Posterior vena cava (tissue), 2 donors: ENCODE measurements at regions of chr19 and their contacts with region 1.

Region 1: GRCh38 chr19:45439569-45440254 is 16.0 kb upstream of the ERCC1 start:
- DNase-seq: peak; percentile 95

Region 2: GRCh38 chr19:45478454-45479238 is 38.9 kb after region 1 on chr19:
- intact Hi-C with region 1: loop called (anchors 1 to 5 kb)
- DNase-seq: peak; percentile 94

Region 3: DNA sequence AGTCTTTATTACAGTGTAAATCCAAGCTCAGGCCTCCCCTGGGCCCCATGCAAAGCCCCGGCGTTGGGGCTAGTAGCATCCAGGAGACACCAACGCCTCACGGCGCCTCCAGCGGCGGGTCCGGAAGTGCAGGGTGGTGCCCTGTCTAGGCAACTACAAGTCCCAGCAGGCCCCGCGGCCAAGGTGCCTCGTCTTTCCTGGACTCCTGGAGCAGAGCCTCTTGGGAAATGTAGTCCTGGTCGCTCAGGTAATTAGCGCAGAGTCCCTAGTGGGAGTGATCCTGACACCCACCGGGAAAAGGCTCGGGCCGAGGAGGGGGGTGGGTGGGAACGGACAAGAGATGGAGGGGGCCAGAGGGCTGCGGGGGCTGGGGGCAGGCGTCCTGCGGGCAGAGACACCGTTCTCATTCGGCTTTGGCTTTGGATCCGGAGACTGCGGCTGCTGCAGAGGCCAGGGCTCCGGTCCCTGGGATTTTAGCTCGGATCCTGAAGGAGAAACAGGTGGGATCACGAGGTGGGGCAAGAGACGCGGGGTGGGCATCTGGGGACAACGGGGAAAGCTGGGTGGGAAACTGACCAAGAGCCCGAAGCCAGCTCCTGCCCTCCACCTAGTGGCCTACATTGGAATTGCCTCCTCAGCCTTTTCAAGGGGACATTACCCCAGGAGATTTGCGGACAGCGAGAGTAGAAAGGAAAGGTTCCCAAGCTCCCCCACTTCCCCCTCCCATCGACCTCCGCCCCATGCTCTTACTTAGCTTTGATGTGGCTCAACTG is 45.8 kb after region 1 on chr19:
- intact Hi-C with region 1: loop called in 1 of 2 experiments (anchors 5 kb)
- DNase-seq: peak; percentile 100

Region 4: GRCh38 chr19:45667620-45668341 is 228.1 kb after region 1 on chr19 and contains the start of gene GIPR:
- intact Hi-C with region 1: no loop called
- DNase-seq: no peak
- total RNA-seq, gene GIPR: 0.38 TPM in 1 of 2 donors, not detected in the other